HepG2 (cell line): ENCODE measurements at regions of chr19 and their contacts with region 1.

Region 1: DNA sequence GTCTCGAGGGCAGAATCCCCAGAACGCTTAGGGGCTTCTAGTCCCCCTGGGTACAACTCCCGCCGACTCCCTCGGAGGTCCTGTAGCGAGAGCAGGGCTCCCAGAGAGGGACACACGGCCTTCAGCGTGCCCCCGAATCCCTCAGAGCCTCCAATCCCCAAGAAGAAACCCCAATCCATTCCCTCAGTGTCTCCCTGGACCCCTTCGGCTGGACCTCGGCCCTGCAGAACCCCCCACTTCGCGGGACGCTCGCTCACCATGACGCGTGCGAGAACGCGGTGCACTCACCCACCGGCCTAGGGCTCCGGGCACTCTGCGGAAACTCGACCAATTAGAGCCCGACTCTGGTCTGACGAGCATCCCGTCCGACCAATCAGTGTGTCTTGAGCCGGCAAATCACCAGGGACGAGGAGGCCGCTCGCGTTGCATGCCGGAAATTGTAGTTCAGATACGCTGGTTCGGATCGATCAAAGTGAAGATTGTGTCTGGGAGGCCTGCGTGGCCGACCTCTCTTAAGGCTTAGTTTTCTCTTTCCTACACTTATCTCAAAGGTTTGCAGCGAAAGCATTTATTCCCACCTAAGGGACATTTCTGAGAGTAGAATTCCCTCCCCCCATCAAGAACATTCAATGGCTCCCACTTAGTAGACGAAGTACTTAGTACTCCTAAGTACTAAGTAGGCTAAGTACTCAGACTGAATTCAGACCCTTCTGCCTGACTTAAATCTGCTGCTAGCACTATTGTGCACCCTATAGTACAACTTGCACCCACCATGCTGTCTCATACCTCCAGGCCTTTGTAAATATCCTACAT is at the start of gene TMEM161A:
- DNase-seq: peak; percentile 96
- ATAC-seq: peak; percentile 99
- H3K4me3 ChIP-seq: peak within 1 kb of the TSS; percentile 67 to 80 (median 70)
- H3K27ac ChIP-seq: peak within 1 kb of the TSS; percentile 66
- H3K4me1 ChIP-seq: peaks cover 14% of the 10 kb centered on the region
- H3K27me3 ChIP-seq: no peaks in the 10 kb centered on the region
- CTCF ChIP-seq: no peak
- EP300 ChIP-seq: no peak
- POLR2A ChIP-seq: peak; percentile 75 to 91
- RAD21 ChIP-seq: peak; percentile 8; the same call in 1 of the 2 replicates
- total RNA-seq, gene TMEM161A: 10.3 and 25.9 TPM in 2 replicates

Region 2: GRCh38 chr19:19053508-19054314 is 84.7 kb before region 1 on chr19:
- CTCF ChIA-PET with region 1: interaction called, 31 read pairs
- POLR2A ChIA-PET with region 1: no interaction called
- in situ Hi-C with region 1: loop called (anchors 5 kb)
- intact Hi-C with region 1: loop called (anchors 2 kb)
- DNase-seq: peak; percentile 50
- ATAC-seq: peak; percentile 77
- H3K4me3 ChIP-seq: no peak overlapping the region
- H3K27ac ChIP-seq: no peak overlapping the region
- H3K4me1 ChIP-seq: peaks cover 13% of the 10 kb centered on the region
- H3K27me3 ChIP-seq: no peaks in the 10 kb centered on the region
- CTCF ChIP-seq: peak; percentile 88
- EP300 ChIP-seq: no peak
- POLR2A ChIP-seq: no peak
- RAD21 ChIP-seq: peak; percentile 95

Region 3: DNA sequence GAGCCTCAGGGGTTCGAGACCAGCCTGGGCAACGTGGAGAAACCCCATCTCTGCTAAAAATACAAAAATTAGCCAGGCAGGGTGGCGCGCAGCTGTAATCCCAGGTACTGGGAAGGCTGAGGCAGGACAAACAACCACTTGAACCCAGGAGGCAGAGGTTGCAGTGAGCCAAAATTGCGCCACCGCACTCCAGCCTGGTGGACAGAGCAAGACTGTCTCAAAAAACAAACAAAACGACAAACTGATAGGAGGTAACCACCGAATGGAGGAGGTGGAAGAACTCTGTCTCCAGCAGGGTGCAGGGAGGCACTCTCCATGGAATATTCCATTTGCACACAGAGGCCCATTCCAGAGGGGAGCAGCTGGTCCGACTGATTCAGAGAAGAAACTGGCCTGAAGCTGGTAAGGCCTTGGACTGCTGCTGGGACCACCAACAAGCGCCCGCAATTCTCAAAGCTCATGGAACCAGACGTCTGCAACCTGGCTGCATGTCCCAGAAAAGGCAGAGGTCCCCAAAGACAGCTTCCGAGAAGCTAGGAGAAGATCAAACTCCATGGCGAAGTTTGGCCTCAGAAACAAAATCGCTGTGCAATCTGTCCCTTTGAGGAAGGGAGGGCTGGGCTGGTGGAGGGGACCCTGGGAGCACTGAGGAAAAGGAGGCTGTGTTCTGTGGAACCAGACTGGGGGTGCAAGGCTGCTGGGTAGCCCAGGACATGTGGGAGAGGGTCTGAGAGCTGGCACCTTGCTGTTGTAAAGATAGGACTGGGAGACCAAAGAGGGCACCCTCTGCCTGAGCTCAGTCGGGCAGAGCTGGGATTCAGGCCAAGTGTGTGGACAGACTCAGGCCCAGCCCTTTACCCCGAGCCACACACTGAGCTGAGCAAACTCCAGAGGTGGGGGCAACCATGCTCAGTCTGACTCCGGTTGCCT is 39.4 kb before region 1 on chr19:
- CTCF ChIA-PET with region 1: no interaction called
- POLR2A ChIA-PET with region 1: no interaction called
- in situ Hi-C with region 1: no loop called
- intact Hi-C with region 1: loop called (anchors 5 kb)
- DNase-seq: peak; percentile 97
- ATAC-seq: peak; percentile 76
- H3K4me3 ChIP-seq: peak overlapping the region; percentile 36 to 61 (median 51); a peak in 5 of 6 replicates
- H3K27ac ChIP-seq: peak overlapping the region; percentile 99
- H3K4me1 ChIP-seq: peaks cover 98% of the 10 kb centered on the region
- H3K27me3 ChIP-seq: no peaks in the 10 kb centered on the region
- CTCF ChIP-seq: peak; percentile 57
- EP300 ChIP-seq: peak in 1 of 2 experiments; percentile 79; a peak in 2 of 4 replicates
- POLR2A ChIP-seq: peak; percentile 56 to 87
- RAD21 ChIP-seq: no peak; the same call in 1 of the 2 replicates

Region 4: GRCh38 chr19:19159534-19159933 is 21.2 kb after region 1 on chr19:
- CTCF ChIA-PET with region 1: no interaction called
- POLR2A ChIA-PET with region 1: no interaction called
- in situ Hi-C with region 1: no loop called
- intact Hi-C with region 1: no loop called
- DNase-seq: no peak
- ATAC-seq: no peak
- H3K4me3 ChIP-seq: no peak overlapping the region
- H3K27ac ChIP-seq: no peak overlapping the region
- H3K4me1 ChIP-seq: no peaks in the 10 kb centered on the region
- H3K27me3 ChIP-seq: no peaks in the 10 kb centered on the region
- CTCF ChIP-seq: no peak
- EP300 ChIP-seq: no peak
- POLR2A ChIP-seq: no peak
- RAD21 ChIP-seq: no peak

Region 5: GRCh38 chr19:19170053-19170872 is 31.9 kb after region 1 on chr19 and contains the start of gene MEF2B:
- CTCF ChIA-PET with region 1: interaction called, 88 read pairs
- POLR2A ChIA-PET with region 1: interaction called, 3 read pairs
- in situ Hi-C with region 1: loop called (anchors 5 kb)
- intact Hi-C with region 1: loop called (anchors 5 kb)
- DNase-seq: peak; percentile 80
- ATAC-seq: peak; percentile 92
- H3K4me3 ChIP-seq: peak within 1 kb of the TSS; percentile 35 to 70 (median 54)
- H3K27ac ChIP-seq: no peak within 1 kb of the TSS
- H3K4me1 ChIP-seq: peaks cover 63% of the 10 kb centered on the region
- H3K27me3 ChIP-seq: no peaks in the 10 kb centered on the region
- CTCF ChIP-seq: no peak
- EP300 ChIP-seq: no peak
- POLR2A ChIP-seq: peak in 1 of 2 experiments; percentile 46; a peak in 2 of 4 replicates
- RAD21 ChIP-seq: no peak
- total RNA-seq, gene MEF2B: 0.44 and 1.2 TPM in 2 replicates

Region 6: DNA sequence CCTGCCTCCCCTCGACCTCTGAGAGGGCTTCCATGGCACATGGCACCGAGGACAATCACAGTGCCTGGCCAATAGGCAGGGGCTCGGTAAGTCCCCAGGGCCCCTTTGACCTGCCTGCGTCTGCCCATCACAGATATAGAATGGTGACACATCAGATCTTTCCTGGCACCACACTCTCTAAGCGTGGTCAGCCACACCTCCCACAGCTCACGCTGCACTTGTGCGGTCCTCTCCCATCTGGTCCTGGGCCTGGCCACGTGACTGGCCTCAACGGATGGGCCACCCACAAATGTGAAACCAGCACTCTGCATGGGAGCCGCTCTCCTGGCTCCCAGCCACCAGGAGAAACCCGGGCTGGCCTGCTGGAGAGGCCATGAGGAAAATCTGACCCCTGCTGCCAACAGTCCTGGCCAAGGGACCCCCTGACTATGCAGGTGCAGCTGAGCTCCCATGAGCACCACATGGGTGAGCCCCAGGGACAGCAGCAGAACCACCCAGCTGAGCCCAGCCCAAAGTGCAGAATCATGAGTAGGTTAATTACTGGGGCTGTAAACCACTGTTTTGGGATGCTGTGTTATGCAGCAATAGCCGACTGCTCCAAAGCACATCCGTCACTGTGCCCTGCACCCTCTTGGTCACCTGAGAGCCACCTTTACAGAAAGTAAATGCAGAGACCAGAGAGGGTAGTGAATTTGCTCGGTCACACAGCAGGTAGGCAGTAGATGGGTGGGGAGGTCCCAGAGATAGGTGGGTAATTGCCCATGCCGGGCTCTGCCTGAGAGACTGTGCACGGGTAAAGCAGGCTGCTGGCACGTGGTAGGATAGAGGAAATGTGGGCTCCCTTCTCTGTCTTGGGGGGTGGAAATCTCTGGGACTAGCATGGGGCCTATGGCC is 41.4 kb after region 1 on chr19:
- CTCF ChIA-PET with region 1: interaction called, 88 read pairs
- POLR2A ChIA-PET with region 1: no interaction called
- in situ Hi-C with region 1: loop called (anchors 5 kb)
- intact Hi-C with region 1: loop called (anchors 5 kb)
- DNase-seq: no peak
- ATAC-seq: no peak
- H3K4me3 ChIP-seq: no peak overlapping the region
- H3K27ac ChIP-seq: no peak overlapping the region
- H3K4me1 ChIP-seq: peaks cover 2% of the 10 kb centered on the region
- H3K27me3 ChIP-seq: no peaks in the 10 kb centered on the region
- CTCF ChIP-seq: no peak
- EP300 ChIP-seq: no peak
- POLR2A ChIP-seq: no peak
- RAD21 ChIP-seq: no peak

Region 7: DNA sequence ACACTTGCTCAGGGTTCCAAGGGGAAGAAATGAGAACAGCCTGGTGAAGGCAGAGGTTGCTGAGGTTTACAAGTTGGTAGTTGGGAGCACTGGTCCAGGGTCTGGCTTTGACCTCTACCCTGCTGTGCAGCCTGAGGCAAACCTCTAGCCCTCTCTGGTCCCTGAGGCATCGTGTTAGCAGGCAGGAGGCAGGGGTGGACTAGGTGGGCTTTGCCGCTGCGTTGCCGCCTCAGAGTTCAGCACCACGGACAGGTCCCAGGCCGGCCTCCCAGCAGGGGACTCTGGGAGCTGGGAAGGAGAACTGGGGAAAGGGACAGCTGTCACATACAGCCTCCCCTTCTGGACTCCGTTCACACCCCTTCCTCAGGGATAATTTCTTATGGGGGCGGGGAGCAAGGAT is 76.5 kb after region 1 on chr19:
- CTCF ChIA-PET with region 1: no interaction called
- POLR2A ChIA-PET with region 1: no interaction called
- in situ Hi-C with region 1: no loop called
- intact Hi-C with region 1: no loop called
- DNase-seq: peak; percentile 30
- ATAC-seq: peak; percentile 85
- H3K4me3 ChIP-seq: no peak overlapping the region
- H3K27ac ChIP-seq: no peak overlapping the region
- H3K4me1 ChIP-seq: no peaks in the 10 kb centered on the region
- H3K27me3 ChIP-seq: peaks cover 2 to 21% of the 10 kb centered on the region in 2 experiments; a peak in 3 of 5 replicates
- CTCF ChIP-seq: no peak
- EP300 ChIP-seq: no peak
- POLR2A ChIP-seq: no peak
- RAD21 ChIP-seq: no peak